ENCODE measurements at regions of chr6 and their contacts with region 1.

Region 1: GRCh38 chr6:12150812-12151432 is 138.8 kb downstream of the HIVEP1 start:
- DNase-seq: peak in 11 of 14 experiments; percentile 11 to 60 (median 26)
- ATAC-seq: no peak
- H3K4me3 ChIP-seq: no peak overlapping the region
- H3K4me3 Mint-ChIP-seq: no peak overlapping the region
- H3K27ac ChIP-seq: no peak overlapping the region
- H3K27ac Mint-ChIP-seq: no peak overlapping the region
- H3K4me1 ChIP-seq: no peaks in the 10 kb centered on the region
- H3K4me1 Mint-ChIP-seq: peaks cover 15% of the 10 kb centered on the region
- H3K27me3 ChIP-seq: no peaks in the 10 kb centered on the region
- H3K27me3 Mint-ChIP-seq: no peaks in the 10 kb centered on the region
- CTCF ChIP-seq: peak; percentile 41

Region 2: DNA sequence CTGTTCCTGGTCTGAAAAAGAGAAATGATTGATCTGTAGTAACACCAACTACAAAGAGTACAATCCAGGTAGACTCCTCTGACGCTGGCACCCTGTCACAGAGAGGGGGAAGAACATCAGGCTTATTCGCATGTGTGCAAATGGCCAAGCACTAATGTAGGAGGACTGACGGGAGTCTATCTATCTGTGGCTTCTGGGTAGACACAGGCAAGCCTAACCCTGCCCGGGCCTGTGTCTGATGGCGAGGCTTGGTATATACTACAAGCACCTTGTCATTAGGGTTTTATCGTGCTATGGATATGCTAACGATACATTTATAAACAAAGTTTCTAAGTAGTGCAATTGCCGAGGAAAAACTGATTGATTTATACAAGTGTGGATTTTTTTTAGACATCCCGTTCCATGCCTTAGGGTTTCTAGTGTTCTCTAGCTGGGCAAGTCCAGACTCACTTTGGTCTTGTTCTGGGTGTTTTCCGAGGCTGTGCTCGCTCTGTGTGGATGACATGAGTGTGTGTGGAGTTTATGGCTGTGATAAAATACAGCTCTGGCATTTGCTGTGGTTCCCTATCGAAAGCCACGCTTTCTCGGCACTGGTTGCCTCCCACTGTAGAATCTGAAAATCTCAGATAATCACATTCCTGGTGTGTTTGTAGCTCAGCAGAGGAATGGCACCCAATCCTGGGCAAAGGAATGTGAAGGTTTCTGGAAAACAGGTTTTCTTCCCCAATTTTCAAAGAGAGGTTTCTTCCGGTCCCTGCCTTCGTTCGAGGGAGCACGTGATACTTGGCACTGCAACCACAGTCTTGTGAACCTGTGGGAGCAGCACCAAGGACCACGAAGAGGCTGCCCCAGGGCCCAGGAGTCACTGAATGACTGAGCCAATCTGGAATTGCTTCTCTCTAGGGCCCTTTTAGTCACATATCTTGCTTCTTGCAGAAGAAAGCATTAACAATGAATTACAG is 71.8 kb after region 1 on chr6:
- CTCF ChIA-PET with region 1: no interaction called
- POLR2A ChIA-PET with region 1: no interaction called
- intact Hi-C with region 1: no loop called
- DNase-seq: no peak
- ATAC-seq: no peak
- H3K4me3 ChIP-seq: no peak overlapping the region
- H3K4me3 Mint-ChIP-seq: no peak overlapping the region
- H3K27ac ChIP-seq: no peak overlapping the region
- H3K27ac Mint-ChIP-seq: no peak overlapping the region
- H3K4me1 ChIP-seq: no peaks in the 10 kb centered on the region
- H3K4me1 Mint-ChIP-seq: no peaks in the 10 kb centered on the region
- H3K27me3 ChIP-seq: no peaks in the 10 kb centered on the region
- H3K27me3 Mint-ChIP-seq: no peaks in the 10 kb centered on the region
- CTCF ChIP-seq: no peak

Region 3: GRCh38 chr6:12592634-12593033 is 441.7 kb after region 1 on chr6:
- CTCF ChIA-PET with region 1: no interaction called
- POLR2A ChIA-PET with region 1: no interaction called
- intact Hi-C with region 1: loop called in 1 of 2 experiments (anchors 5 kb)
- DNase-seq: peak in 2 of 14 experiments; percentile 16 to 27
- ATAC-seq: no peak
- H3K4me3 ChIP-seq: no peak overlapping the region
- H3K4me3 Mint-ChIP-seq: no peak overlapping the region
- H3K27ac ChIP-seq: no peak overlapping the region
- H3K27ac Mint-ChIP-seq: no peak overlapping the region
- H3K4me1 ChIP-seq: no peaks in the 10 kb centered on the region
- H3K4me1 Mint-ChIP-seq: no peaks in the 10 kb centered on the region
- H3K27me3 ChIP-seq: peaks cover 0 to 7% of the 10 kb centered on the region in 2 experiments
- H3K27me3 Mint-ChIP-seq: peaks cover 9% of the 10 kb centered on the region
- CTCF ChIP-seq: no peak